ENCODE measurements at regions of chr10 and their contacts with region 1.

Region 1: DNA sequence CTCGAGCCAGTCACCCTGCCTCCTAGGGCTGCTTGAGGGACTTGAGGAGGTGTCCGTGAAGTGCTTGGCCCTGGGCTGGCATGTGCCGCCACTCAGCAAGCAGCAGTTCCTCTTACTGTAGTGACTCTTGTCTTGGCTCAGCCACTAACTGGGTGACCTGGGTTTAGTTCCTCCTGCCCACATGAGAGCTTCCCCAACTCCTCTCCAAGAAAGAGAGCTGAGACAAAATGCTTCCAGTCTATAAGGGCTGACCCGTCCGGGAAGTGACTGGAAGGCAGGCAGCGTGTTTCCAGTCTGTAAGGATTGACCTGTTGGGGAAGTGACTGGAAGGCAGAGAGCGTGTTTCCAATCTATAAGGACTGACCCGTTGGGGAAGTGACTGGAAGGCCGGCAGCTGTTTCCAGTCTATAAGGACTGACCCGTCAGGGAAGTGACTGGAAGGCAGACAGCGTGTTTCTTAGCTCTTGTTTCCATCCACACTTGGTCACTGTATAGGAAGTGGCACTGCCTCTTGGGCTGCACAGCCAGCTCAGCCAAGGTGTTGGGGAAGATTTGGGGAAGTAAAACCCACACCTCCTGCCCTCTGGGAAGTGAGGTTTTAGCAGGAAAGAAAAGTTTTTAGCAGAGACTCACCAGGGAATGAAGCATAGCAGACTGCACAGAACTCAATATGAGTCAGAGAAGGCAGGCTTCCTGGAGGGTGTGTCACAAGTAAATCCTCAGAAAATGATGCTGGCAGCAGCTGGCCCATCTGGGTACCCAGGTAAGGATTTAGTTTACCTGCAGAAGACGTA is 53.2 kb upstream of the PPIF start:
- DNase-seq: no peak
- ATAC-seq: peak; percentile 74
- H3K4me3 Mint-ChIP-seq: peak overlapping the region; percentile 42
- H3K27ac Mint-ChIP-seq: peak overlapping the region; percentile 62
- H3K4me1 Mint-ChIP-seq: peaks cover 57% of the 10 kb centered on the region
- H3K27me3 Mint-ChIP-seq: no peaks in the 10 kb centered on the region
- CTCF ChIP-seq: no peak

Region 2: DNA sequence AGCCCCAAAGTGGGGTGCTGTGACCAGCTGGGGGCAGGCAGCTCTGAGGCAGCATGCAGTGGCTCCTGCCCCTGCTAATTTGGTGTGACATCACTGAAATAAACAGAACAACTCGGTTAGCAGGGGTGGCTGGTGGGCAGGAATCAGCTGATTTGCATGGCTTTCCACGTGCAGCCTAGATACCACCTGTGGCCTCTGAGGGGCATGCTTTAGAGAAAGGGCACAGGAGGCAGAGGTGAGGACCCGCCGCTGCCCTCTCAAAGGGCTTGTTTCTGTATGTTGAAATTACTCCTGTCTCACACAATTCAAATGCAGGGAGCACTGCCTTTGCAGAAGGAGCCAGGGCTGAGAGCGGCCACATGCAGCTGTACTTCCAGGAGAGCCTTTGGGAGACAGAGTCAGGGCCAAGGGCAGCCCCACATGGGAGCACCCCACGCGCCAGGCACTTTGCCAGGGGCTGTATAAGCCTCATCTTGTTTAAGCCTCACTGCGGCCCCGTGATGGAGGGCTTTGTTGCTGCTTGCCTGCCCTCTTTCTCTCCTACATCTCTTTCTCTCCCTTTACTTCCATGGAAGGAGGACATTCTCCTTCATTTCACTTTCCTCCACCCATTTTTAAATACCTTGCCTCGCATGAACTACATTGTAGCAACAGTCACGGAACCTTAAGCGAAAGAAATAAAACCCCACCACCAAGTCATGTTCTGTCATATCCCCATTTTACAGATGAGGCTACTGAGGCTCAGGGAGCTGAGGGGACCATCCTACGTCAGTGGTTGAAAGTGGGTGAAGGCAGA is 87.5 kb before region 1 on chr10:
- CTCF ChIA-PET with region 1: no interaction called
- POLR2A ChIA-PET with region 1: no interaction called
- intact Hi-C with region 1: no loop called
- DNase-seq: no peak
- ATAC-seq: no peak
- H3K4me3 Mint-ChIP-seq: no peak overlapping the region
- H3K27ac Mint-ChIP-seq: no peak overlapping the region
- H3K4me1 Mint-ChIP-seq: no peaks in the 10 kb centered on the region
- H3K27me3 Mint-ChIP-seq: no peaks in the 10 kb centered on the region
- CTCF ChIP-seq: no peak

Region 3: DNA sequence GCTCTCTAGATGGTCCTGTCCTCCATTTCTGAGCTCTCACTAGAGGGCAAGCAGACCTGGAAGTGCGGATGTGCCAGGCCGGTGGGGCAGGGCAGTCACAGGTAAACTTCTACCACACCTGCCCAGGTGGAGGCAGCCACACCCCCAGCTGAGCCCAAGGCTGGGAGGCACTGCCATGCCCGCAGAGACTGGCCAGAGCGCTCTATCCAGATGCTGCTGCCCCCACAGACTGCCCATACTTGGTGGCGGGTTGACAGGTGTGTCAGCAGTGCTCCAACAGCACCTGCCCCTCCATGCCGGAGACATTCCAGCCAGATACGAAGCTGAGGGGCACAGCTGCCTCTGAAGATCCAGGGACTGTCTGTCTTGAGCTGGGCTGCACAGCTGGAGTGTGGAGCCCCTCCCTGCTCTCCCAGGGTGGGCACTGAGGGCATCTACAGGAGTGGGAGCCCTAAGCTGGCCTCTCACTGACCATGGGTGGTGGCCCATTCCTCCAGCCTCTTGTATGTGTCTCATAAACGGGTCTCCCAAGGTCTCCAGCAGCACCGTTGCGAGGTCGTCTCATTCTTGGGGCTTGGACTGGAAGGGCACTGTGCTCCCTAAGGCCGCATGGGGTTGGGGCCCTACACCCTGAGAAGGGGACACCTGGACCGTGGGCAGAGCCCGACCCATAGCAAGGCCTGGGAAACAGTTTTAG is 15.1 kb after region 1 on chr10:
- CTCF ChIA-PET with region 1: no interaction called
- POLR2A ChIA-PET with region 1: interaction called, 3 read pairs
- intact Hi-C with region 1: loop called (anchors 2 kb)
- DNase-seq: no peak
- ATAC-seq: no peak
- H3K4me3 Mint-ChIP-seq: no peak overlapping the region
- H3K27ac Mint-ChIP-seq: no peak overlapping the region
- H3K4me1 Mint-ChIP-seq: no peaks in the 10 kb centered on the region
- H3K27me3 Mint-ChIP-seq: no peaks in the 10 kb centered on the region
- CTCF ChIP-seq: no peak